ENCODE measurements at regions of chr7 and their contacts with region 1.

Region 1: DNA sequence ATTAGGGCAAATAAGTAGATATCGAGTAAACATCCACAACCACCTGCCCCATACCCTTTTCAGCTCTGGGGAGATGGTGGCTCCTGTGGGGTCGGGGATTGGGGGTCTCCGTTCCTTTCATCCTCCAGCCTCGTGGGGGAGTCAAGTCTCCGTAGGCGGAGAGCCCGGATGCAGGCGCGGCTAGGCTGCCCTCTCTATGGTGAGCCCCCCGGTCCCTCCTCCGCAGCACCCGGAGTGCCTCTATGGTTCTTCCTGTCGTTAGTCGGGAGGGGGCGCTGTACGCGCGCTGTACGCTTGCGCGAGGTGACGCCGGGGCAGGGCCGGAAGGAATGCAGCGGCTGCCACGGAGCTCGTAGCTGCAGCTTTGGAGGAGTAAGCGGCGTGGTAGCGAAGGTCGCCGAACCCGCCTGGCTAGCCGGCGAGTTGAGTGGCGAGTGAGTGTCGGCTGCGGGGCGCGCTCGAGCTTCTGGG is 14.8 kb upstream of the MMD2 start:
- DNase-seq: peak; percentile 93
- H3K4me3 ChIP-seq: peak overlapping the region; percentile 65 to 81 (median 69)
- H3K27ac ChIP-seq: peak overlapping the region; percentile 83 to 93 (median 88)
- H3K4me1 ChIP-seq: peaks cover 0 to 19% (median 17%) of the 10 kb centered on the region in 4 donors
- H3K27me3 ChIP-seq: no peaks in the 10 kb centered on the region
- CTCF ChIP-seq: peak; percentile 66 to 78 (median 71)
- EP300 ChIP-seq: no peak
- POLR2A ChIP-seq: no peak

Region 2: DNA sequence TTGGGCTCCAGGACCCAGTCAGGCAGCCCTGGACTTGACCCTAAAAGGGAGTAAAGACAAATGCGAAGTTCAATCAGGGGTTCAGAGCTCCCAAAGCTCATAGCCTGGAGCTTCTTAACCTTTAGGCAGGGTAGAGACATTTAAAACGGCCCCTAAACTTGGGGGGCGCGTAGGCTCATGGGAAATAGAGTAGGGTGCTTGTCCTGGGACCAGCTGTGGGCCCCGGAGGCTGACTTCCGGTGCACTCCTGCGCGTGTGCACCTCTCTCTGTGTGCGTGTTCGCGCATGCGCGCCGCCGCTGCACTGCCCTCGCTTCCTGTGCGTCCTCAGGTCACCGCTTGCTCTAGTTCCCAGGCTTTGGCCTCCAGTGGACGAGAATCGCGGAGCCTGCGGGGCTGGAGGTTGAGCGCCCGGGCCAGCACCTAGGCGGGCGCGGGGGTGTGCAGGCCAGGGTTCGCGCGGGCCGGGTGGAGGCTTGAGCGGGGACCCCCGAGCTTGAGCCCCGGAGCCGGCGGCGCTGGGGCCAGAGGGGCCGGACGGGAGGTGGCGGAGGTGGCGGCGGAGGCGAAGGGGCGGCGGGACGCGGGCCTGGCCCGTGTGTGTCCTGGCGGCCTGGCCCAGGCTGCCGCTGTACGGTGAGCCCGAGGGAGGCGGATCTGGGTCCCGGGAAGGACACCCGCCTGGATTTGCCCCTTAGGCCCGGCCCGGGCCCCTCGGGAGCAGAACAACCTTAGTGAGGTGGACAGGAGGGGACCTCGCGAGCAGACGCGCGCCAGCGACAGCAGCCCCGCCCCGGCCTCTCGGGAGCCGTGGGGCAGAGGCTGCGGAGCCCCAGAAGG is 72.0 kb after region 1 on chr7 and contains the start of gene RBAK:
- intact Hi-C with region 1: loop called (anchors 2 kb)
- DNase-seq: peak; percentile 98
- H3K4me3 ChIP-seq: peak within 1 kb of the TSS; percentile 74 to 98 (median 92)
- H3K27ac ChIP-seq: peak within 1 kb of the TSS; percentile 85 to 89 (median 87)
- H3K4me1 ChIP-seq: peaks cover 0 to 18% (median 6%) of the 10 kb centered on the region in 4 donors
- H3K27me3 ChIP-seq: no peaks in the 10 kb centered on the region
- CTCF ChIP-seq: no peak
- EP300 ChIP-seq: no peak
- POLR2A ChIP-seq: no peak
- total RNA-seq, gene RBAK: 8.9 to 12.5 (median 10.3) TPM

Region 3: DNA sequence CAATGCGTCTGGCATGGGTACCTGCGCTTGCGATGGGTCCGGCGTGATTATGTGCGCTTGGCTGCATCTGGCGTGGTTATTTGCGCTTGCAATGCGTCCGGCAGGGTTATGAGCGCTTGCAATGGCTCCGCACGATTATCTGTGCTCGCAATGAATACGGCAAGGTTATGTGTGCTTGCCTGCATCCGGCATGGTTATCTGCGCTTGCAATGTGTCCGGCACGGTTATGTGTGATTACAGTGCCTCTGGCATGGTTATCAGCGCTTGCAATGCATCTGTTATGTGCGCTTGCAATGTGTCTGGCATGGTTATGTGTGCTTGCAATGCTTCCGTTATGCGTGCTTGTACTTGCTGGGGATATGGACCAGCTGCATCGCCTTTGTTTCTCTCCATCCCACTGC is 109.5 kb after region 1 on chr7:
- intact Hi-C with region 1: loop called (anchors 2 kb)
- DNase-seq: no peak
- H3K4me3 ChIP-seq: no peak overlapping the region
- H3K27ac ChIP-seq: no peak overlapping the region
- H3K4me1 ChIP-seq: peaks cover 0 to 6% (median 2%) of the 10 kb centered on the region in 4 donors
- H3K27me3 ChIP-seq: peaks cover 0 to 21% (median 6%) of the 10 kb centered on the region in 3 donors
- CTCF ChIP-seq: no peak
- EP300 ChIP-seq: no peak
- POLR2A ChIP-seq: no peak